ENCODE measurements at regions of chrX and their contacts with region 1.

Region 1: GRCh38 chrX:54639346-54640102 is 109.5 kb downstream of the GNL3L start:
- DNase-seq: peak; percentile 94
- H3K4me3 Mint-ChIP-seq: peak overlapping the region; percentile 87
- H3K27ac Mint-ChIP-seq: peak overlapping the region; percentile 98
- H3K4me1 Mint-ChIP-seq: peaks cover 9% of the 10 kb centered on the region
- H3K27me3 Mint-ChIP-seq: no peaks in the 10 kb centered on the region

Region 2: GRCh38 chrX:54439967-54440871 is 199.3 kb before region 1 on chrX and contains the start of gene TSR2:
- CTCF ChIA-PET with region 1: no interaction called
- POLR2A ChIA-PET with region 1: interaction called, 17 read pairs
- DNase-seq: peak; percentile 83
- H3K4me3 Mint-ChIP-seq: peak within 1 kb of the TSS; percentile 90
- H3K27ac Mint-ChIP-seq: peak within 1 kb of the TSS; percentile 79
- H3K4me1 Mint-ChIP-seq: peaks cover 24% of the 10 kb centered on the region
- H3K27me3 Mint-ChIP-seq: no peaks in the 10 kb centered on the region
- total RNA-seq, gene TSR2: 25.5 to 26.2 TPM

Region 3: GRCh38 chrX:54529552-54530357 is 109.8 kb before region 1 on chrX and contains the start of gene GNL3L:
- CTCF ChIA-PET with region 1: interaction called, 9 read pairs
- POLR2A ChIA-PET with region 1: interaction called, 28 read pairs
- DNase-seq: peak; percentile 86
- H3K4me3 Mint-ChIP-seq: peak within 1 kb of the TSS; percentile 90
- H3K27ac Mint-ChIP-seq: peak within 1 kb of the TSS; percentile 91
- H3K4me1 Mint-ChIP-seq: peaks cover 32% of the 10 kb centered on the region
- H3K27me3 Mint-ChIP-seq: no peaks in the 10 kb centered on the region
- total RNA-seq, gene GNL3L: 34.9 to 36.7 TPM

Region 4: GRCh38 chrX:54808605-54809483 is 169.3 kb after region 1 on chrX:
- CTCF ChIA-PET with region 1: interaction called, 7 read pairs
- POLR2A ChIA-PET with region 1: interaction called, 21 read pairs
- DNase-seq: peak; percentile 93
- H3K4me3 Mint-ChIP-seq: peak overlapping the region; percentile 84
- H3K27ac Mint-ChIP-seq: peak overlapping the region; percentile 87
- H3K4me1 Mint-ChIP-seq: peaks cover 30% of the 10 kb centered on the region
- H3K27me3 Mint-ChIP-seq: peaks cover 10% of the 10 kb centered on the region

Region 5: DNA sequence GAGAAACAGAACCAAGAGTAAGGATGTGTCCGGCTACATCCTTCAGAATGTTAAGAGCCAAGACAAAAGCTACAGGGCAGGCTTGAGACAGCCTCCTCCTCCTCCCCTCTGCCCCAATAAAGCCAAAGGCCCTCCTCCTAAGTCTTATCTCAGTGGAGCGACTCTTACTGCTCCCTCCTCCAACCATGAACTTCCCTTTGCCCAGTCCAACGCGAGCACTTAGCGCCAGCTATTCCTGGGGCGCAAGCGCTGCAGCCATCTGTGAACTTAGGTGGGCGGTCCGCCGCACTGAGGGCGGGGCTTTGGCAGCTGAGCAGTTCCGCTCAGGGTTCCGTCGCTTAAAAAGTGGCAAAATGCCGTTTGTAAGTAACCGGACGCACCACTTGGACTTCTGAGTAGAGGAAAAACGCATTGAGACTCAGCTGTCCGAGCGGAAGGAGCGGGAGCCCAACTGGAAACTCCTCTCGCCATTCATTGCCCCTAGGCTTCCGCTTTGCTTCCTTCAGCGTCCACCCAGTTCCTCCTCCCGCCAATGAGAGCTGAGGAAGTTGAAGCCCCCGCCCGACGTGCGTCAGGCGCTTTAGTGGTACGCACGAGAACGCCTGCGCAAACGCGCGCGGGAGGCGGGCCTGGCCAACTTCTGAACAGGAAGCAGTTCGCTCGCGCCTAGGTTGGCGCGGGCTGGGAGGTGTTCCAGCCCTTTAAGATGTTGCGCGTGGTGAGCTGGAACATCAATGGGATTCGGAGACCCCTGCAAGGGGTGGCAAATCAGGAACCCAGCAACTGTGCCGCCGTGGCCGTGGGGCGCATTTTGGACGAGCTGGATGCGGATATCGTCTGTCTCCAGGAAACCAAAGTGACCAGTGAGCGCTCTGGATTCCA is 360.4 kb after region 1 on chrX and contains the start of gene APEX2:
- CTCF ChIA-PET with region 1: interaction called, 3 read pairs
- POLR2A ChIA-PET with region 1: interaction called, 10 read pairs
- DNase-seq: peak; percentile 90
- H3K4me3 Mint-ChIP-seq: peak within 1 kb of the TSS; percentile 97
- H3K27ac Mint-ChIP-seq: peak within 1 kb of the TSS; percentile 90
- H3K4me1 Mint-ChIP-seq: peaks cover 31% of the 10 kb centered on the region
- H3K27me3 Mint-ChIP-seq: no peaks in the 10 kb centered on the region
- total RNA-seq, gene APEX2: 25.5 to 26.8 TPM

Measured in activated CD4-positive, alpha-beta memory T cell treated with anti-CD3 and anti-CD28 coated beads, Interleukin-2, amount 10 ng/mL, durations not matched to agents 7 days and 5 days (primary cell).